ENCODE measurements at regions of chr10 and their contacts with region 1.

Region 1: GRCh38 chr10:46228563-46229071 is 58.2 kb upstream of the ANTXRL start:
- DNase-seq: peak; percentile 67
- H3K4me3 Mint-ChIP-seq: no peak overlapping the region
- H3K27ac Mint-ChIP-seq: no peak overlapping the region
- H3K4me1 Mint-ChIP-seq: no peaks in the 10 kb centered on the region
- H3K27me3 Mint-ChIP-seq: no peaks in the 10 kb centered on the region

Region 2: DNA sequence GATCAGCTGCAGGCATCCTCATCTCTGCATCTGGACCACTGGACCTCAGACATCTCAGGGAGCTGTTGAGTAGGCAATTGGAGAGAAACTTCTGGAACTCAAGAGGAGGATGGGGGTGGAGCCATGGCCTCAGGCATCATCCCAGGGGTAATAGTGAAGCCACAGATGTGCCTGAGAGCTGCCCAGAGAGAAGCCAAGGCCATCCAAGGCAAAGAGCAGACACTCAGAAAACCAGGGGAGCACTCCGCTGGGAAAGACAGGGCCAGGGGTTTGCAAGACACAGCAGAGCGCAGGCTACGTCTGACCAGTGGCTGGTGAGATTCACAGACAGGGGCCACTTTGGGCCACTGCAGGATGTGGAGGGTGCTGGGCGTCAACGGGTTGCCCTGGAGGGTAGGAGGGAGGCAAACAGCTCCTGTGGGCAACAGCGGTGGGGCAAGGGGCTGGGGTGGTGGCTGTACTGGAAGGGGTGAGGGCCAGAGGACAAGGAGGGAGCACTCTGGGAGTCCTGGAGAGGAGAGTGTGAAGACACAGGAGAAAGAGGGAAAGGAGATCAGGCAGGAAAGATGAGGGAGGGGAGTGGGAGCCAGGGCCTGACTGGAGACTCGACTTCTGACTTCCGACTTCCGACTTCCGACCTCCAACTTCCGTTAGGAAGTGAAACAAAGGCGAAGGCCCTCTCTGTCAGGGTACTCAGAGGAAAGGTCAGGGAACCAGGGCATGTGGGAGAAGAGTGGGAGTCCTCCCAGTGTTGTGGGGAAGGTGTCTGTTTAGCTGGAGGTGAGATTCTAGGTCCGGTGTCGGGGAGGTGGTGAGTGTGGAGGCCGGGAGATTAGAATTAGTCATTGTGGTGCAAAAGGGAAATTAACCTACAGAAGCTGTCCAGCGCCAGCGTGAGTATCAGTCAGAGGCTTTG is 11.5 kb before region 1 on chr10:
- CTCF ChIA-PET with region 1: interaction called, 16 read pairs
- DNase-seq: no peak
- H3K4me3 Mint-ChIP-seq: no peak overlapping the region
- H3K27ac Mint-ChIP-seq: no peak overlapping the region
- H3K4me1 Mint-ChIP-seq: peaks cover 4% of the 10 kb centered on the region
- H3K27me3 Mint-ChIP-seq: no peaks in the 10 kb centered on the region